ENCODE measurements at regions of chr7 and their contacts with region 1.

Region 1: GRCh38 chr7:27210441-27211083 is 10.7 kb upstream of the HOXA13 start:
- DNase-seq: peak; percentile 72
- ATAC-seq: peak; percentile 80
- H3K4me3 Mint-ChIP-seq: peak overlapping the region; percentile 30
- H3K27ac Mint-ChIP-seq: no peak overlapping the region
- H3K4me1 Mint-ChIP-seq: peaks cover 12% of the 10 kb centered on the region
- H3K27me3 Mint-ChIP-seq: peaks cover 90% of the 10 kb centered on the region
- CTCF ChIP-seq: peak; percentile 85

Region 2: GRCh38 chr7:27130540-27131389 is 79.8 kb before region 1 on chr7 and contains the start of gene HOXA4:
- CTCF ChIA-PET with region 1: no interaction called
- POLR2A ChIA-PET with region 1: no interaction called
- intact Hi-C with region 1: no loop called
- DNase-seq: peak; percentile 69
- ATAC-seq: peak; percentile 89
- H3K4me3 Mint-ChIP-seq: peak within 1 kb of the TSS; percentile 60
- H3K27ac Mint-ChIP-seq: no peak within 1 kb of the TSS
- H3K4me1 Mint-ChIP-seq: peaks cover 14% of the 10 kb centered on the region
- H3K27me3 Mint-ChIP-seq: peaks cover 29% of the 10 kb centered on the region
- CTCF ChIP-seq: no peak
- total RNA-seq, gene HOXA4: 0.25 TPM in 1 of 2 experiments, not detected in the other

Region 3: DNA sequence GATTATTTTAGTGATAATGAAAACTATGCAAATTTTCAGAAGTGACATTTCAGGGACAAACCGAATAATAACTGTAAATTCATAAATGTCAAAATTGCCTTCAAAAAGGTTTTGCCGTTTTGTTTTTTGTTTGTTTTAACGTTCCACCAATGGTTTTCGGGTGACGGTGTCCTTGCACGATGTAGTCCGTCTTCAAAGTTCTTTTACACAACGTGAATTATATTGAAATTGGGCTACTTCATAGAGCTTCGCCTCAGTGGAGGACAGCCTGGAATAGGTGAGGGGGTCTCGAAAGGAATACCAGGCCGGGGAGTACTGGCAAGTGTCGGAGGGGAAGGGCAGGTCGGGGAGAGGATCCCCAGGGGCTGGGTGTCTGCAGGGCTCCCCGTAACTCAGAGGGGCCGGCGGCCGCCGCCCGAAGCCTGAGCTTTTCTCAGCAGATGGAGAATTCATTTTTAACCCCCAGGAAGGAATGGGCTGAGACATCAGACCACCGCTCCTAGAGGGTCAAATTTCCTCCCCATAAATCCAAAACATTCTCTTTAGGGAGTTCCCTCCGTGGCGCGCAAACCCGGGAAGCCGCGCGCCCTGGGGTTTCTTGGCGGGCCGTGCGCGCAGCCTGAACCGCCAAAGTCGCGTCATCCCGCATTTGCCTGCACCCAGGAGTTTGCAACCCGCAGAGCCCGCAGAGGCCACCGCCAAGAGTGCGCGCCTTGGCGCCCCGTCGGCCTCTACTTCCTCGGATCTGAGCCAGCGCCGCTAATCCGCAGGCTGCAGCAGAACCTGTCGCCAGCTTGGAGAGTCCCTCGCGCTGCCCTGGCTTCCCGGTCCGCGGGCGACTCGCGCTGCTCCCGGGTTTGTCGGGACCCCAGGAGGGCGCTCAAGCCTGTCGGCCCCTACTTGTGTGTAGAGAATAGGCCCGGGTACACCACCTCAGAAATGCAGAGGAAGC is 14.7 kb after region 1 on chr7:
- CTCF ChIA-PET with region 1: interaction called, 20 read pairs
- POLR2A ChIA-PET with region 1: no interaction called
- intact Hi-C with region 1: no loop called
- DNase-seq: no peak
- ATAC-seq: no peak
- H3K4me3 Mint-ChIP-seq: no peak overlapping the region
- H3K27ac Mint-ChIP-seq: no peak overlapping the region
- H3K4me1 Mint-ChIP-seq: no peaks in the 10 kb centered on the region
- H3K27me3 Mint-ChIP-seq: peaks cover 61% of the 10 kb centered on the region
- CTCF ChIP-seq: no peak

Region 4: GRCh38 chr7:27842094-27842692 is 631.6 kb after region 1 on chr7:
- CTCF ChIA-PET with region 1: no interaction called
- POLR2A ChIA-PET with region 1: no interaction called
- intact Hi-C with region 1: no loop called
- DNase-seq: no peak
- ATAC-seq: no peak
- H3K4me3 Mint-ChIP-seq: no peak overlapping the region
- H3K27ac Mint-ChIP-seq: no peak overlapping the region
- H3K4me1 Mint-ChIP-seq: peaks cover 14% of the 10 kb centered on the region
- H3K27me3 Mint-ChIP-seq: no peaks in the 10 kb centered on the region
- CTCF ChIP-seq: no peak

Region 5: DNA sequence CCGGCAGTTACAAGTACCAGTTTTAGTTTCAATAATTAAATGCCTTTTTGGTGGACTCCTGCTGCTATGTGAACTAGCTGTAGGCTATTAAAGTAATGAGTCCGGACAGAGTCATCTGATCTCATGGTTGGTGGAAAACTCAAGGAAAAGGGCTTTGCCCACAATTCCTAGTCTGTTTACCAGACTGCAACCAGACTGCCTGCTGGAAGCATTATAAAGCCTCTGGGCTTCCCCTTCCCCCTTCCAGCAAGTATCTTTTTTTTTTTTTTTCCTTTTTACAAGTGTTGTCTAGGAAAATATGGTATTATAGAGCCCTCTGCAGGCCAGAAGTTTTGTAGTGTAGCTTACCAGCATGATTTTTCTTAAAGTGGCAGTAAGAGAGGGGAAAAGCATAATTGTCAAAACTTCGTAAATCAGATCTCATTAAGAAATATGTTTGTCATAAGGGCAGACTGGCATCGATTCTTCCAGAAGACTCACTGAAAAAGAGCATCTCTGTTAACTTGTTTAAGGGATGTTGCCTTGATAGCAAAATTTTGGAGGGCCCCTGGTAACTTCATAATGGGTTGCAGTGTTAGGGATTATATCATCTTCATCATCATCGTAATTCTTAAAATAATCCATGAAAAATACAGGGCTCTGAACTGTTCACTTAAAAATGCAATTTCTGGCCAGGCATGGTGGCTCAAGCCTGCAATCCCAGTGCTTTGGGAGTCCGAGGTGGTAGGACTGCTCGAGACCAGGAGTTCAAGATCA is 710.7 kb after region 1 on chr7:
- CTCF ChIA-PET with region 1: interaction called, 10 read pairs
- POLR2A ChIA-PET with region 1: no interaction called
- intact Hi-C with region 1: loop called (anchors 10 kb)
- DNase-seq: peak; percentile 53
- ATAC-seq: peak; percentile 62
- H3K4me3 Mint-ChIP-seq: no peak overlapping the region
- H3K27ac Mint-ChIP-seq: no peak overlapping the region
- H3K4me1 Mint-ChIP-seq: peaks cover 7% of the 10 kb centered on the region
- H3K27me3 Mint-ChIP-seq: no peaks in the 10 kb centered on the region
- CTCF ChIP-seq: peak; percentile 67

Measured in activated CD8-positive, alpha-beta T cell treated with anti-CD3 and anti-CD28 coated beads for 36 hours (primary cell).